ENCODE measurements at regions of chr4 and their contacts with region 1.

Region 1: DNA sequence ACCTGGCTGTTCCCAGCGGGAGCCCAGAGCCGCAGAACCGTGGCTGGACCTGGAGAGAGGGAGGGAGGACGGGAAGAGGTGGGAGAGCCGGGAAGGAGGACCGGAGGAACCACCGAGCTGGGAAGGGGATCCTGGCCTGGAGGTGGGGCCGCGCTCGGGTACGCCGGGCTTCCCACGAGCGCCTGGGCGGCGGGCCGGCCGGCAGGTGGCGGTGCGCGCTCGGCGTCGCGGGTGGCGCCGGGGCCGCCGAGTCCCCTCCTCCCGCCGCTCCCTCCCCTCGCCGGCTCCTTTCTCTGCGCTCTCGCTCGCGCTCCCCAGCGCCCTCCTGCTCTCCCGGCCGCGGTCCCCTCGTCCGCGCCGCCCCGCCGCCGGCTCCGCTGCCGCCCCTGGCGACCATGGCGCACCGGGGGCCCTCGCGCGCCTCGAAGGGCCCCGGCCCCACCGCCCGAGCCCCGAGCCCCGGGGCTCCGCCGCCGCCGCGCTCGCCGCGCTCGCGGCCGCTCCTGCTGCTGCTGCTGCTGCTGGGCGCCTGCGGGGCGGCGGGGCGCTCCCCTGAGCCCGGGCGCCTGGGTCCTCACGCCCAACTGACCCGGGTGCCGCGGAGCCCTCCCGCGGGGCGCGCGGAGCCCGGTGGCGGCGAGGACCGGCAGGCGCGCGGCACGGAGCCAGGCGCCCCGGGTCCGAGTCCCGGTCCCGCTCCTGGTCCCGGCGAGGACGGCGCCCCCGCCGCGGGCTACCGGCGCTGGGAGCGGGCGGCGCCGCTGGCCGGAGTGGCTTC is at the start of gene SORCS2:
- DNase-seq: peak; percentile 67 to 78 (median 74)
- ATAC-seq: peak; percentile 86 to 94 (median 90)
- H3K4me3 ChIP-seq: peak within 1 kb of the TSS; percentile 46 to 50 (median 47)
- H3K27ac ChIP-seq: no peak within 1 kb of the TSS
- H3K4me1 ChIP-seq: peaks cover 0 to 14% (median 0%) of the 10 kb centered on the region in 4 donors
- H3K27me3 ChIP-seq: no peaks in the 10 kb centered on the region
- CTCF ChIP-seq: peak; percentile 59 to 92 (median 76)
- POLR2A ChIP-seq: no peak
- total RNA-seq, gene SORCS2: 0.18 to 6.2 (median 3.1) TPM

Region 2: GRCh38 chr4:7295911-7296660 is 103.6 kb after region 1 on chr4:
- intact Hi-C with region 1: loop called (anchors 5 kb)
- DNase-seq: peak; percentile 47 to 67 (median 52)
- ATAC-seq: peak; percentile 61 to 82 (median 76)
- H3K4me3 ChIP-seq: no peak overlapping the region
- H3K27ac ChIP-seq: no peak overlapping the region
- H3K4me1 ChIP-seq: no peaks in the 10 kb centered on the region
- H3K27me3 ChIP-seq: no peaks in the 10 kb centered on the region
- CTCF ChIP-seq: peak; percentile 54 to 68 (median 68)
- POLR2A ChIP-seq: no peak

Region 3: DNA sequence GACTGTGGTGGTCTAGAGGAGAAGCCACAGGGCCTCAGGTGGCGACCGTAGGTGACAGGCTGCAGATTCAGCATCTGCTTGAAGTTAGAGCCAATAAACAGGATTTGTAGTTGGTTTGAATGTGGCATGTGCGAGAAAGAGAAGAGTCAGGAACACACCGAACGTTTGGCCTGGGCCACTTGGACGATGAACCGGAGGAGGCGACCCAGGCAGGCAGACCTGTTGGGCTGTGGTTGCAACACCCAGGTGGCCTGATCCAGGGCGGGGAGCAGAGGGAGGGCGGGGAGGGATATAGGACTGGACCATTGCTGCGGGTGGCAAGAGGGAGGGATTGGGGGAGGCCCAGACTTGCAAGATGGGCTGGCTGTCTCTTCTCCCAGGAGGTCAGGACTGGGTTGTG is 252.3 kb after region 1 on chr4:
- intact Hi-C with region 1: loop called in 1 of 2 experiments (anchors 10 kb)
- DNase-seq: peak; percentile 43 to 91 (median 70)
- ATAC-seq: peak; percentile 73 to 98 (median 84)
- H3K4me3 ChIP-seq: no peak overlapping the region
- H3K27ac ChIP-seq: peak overlapping the region in 1 of 3 donors; percentile 58
- H3K4me1 ChIP-seq: peaks cover 0 to 9% (median 0%) of the 10 kb centered on the region in 4 donors
- H3K27me3 ChIP-seq: no peaks in the 10 kb centered on the region
- CTCF ChIP-seq: no peak
- POLR2A ChIP-seq: no peak

Region 4: GRCh38 chr4:7792616-7793015 is 600.2 kb after region 1 on chr4:
- intact Hi-C with region 1: loop called in 1 of 2 experiments (anchors 10 kb)
- DNase-seq: no peak
- ATAC-seq: no peak
- H3K4me3 ChIP-seq: no peak overlapping the region
- H3K27ac ChIP-seq: no peak overlapping the region
- H3K4me1 ChIP-seq: no peaks in the 10 kb centered on the region
- H3K27me3 ChIP-seq: no peaks in the 10 kb centered on the region
- CTCF ChIP-seq: no peak
- POLR2A ChIP-seq: no peak